ENCODE measurements at regions of chr11 and their contacts with region 1.

Region 1: GRCh38 chr11:132674151-132674550 is 858.1 kb downstream of the OPCML start:
- DNase-seq: no peak
- ATAC-seq: no peak
- H3K4me3 ChIP-seq: no peak overlapping the region
- H3K4me3 Mint-ChIP-seq: no peak overlapping the region
- H3K27ac ChIP-seq: no peak overlapping the region
- H3K27ac Mint-ChIP-seq: no peak overlapping the region
- H3K4me1 ChIP-seq: no peaks in the 10 kb centered on the region
- H3K4me1 Mint-ChIP-seq: no peaks in the 10 kb centered on the region
- H3K27me3 ChIP-seq: no peaks in the 10 kb centered on the region
- H3K27me3 Mint-ChIP-seq: no peaks in the 10 kb centered on the region
- CTCF ChIP-seq: no peak

Region 2: GRCh38 chr11:132620423-132620822 is 53.7 kb before region 1 on chr11:
- intact Hi-C with region 1: loop called (anchors 10 kb)
- DNase-seq: no peak
- ATAC-seq: no peak
- H3K4me3 ChIP-seq: no peak overlapping the region
- H3K4me3 Mint-ChIP-seq: no peak overlapping the region
- H3K27ac ChIP-seq: no peak overlapping the region
- H3K27ac Mint-ChIP-seq: no peak overlapping the region
- H3K4me1 ChIP-seq: no peaks in the 10 kb centered on the region
- H3K4me1 Mint-ChIP-seq: no peaks in the 10 kb centered on the region
- H3K27me3 ChIP-seq: no peaks in the 10 kb centered on the region
- H3K27me3 Mint-ChIP-seq: no peaks in the 10 kb centered on the region
- CTCF ChIP-seq: no peak

Region 3: GRCh38 chr11:132784441-132784840 is 110.3 kb after region 1 on chr11:
- intact Hi-C with region 1: no loop called
- DNase-seq: no peak
- ATAC-seq: no peak
- H3K4me3 ChIP-seq: no peak overlapping the region
- H3K4me3 Mint-ChIP-seq: no peak overlapping the region
- H3K27ac ChIP-seq: no peak overlapping the region
- H3K27ac Mint-ChIP-seq: no peak overlapping the region
- H3K4me1 ChIP-seq: no peaks in the 10 kb centered on the region
- H3K4me1 Mint-ChIP-seq: no peaks in the 10 kb centered on the region
- H3K27me3 ChIP-seq: no peaks in the 10 kb centered on the region
- H3K27me3 Mint-ChIP-seq: no peaks in the 10 kb centered on the region
- CTCF ChIP-seq: no peak

Measured in natural killer cell (primary cell).